ENCODE measurements at regions of chr1 and their contacts with region 1.

Region 1: GRCh38 chr1:200729863-200730262 is 8.8 kb upstream of the CAMSAP2 start:
- DNase-seq: no peak
- ATAC-seq: no peak

Region 2: DNA sequence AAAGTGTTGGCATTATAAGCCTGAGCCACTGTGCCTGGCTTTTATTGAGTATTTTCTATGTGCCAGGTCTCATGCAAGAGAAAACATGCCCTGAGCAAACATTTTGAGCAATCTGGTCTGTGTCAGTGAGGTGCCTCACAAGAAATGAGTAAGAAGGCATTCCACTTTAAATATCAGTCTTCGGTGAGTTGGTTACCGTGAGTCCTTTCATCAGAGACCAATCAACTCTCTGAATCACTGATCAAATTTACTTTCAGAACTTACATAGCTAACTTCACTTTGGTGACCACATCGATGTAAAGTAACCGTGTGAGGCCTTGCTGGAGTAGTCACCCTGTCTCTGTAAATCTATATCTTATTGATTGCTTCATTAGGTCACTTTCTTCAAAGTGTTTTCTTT is 45.8 kb before region 1 on chr1:
- intact Hi-C with region 1: loop called in 1 of 2 experiments (anchors 5 kb)
- DNase-seq: no peak
- ATAC-seq: no peak